Heart right ventricle (tissue), 16 donors: ENCODE measurements at regions of chr1 and their contacts with region 1.

Region 1: GRCh38 chr1:100351095-100351891 is 1.0 kb upstream of the CDC14A start:
- DNase-seq: peak; percentile 86 to 87
- ATAC-seq: peak; percentile 63 to 88 (median 83)
- H3K4me3 ChIP-seq: peak overlapping the region; percentile 67 to 97 (median 90)
- H3K27ac ChIP-seq: peak overlapping the region; percentile 57 to 95 (median 89)
- H3K4me1 ChIP-seq: peaks cover 3 to 36% (median 32%) of the 10 kb centered on the region in 9 donors
- H3K27me3 ChIP-seq: no peaks in the 10 kb centered on the region
- CTCF ChIP-seq: peak in 7 of 9 donors; percentile 33 to 63 (median 45)

Region 2: GRCh38 chr1:99994496-99994895 is 356.8 kb before region 1 on chr1:
- intact Hi-C with region 1: no loop called
- DNase-seq: no peak
- ATAC-seq: no peak
- H3K4me3 ChIP-seq: no peak overlapping the region
- H3K27ac ChIP-seq: no peak overlapping the region
- H3K4me1 ChIP-seq: no peaks in the 10 kb centered on the region
- H3K27me3 ChIP-seq: no peaks in the 10 kb centered on the region
- CTCF ChIP-seq: no peak

Region 3: GRCh38 chr1:100249537-100250257 is 101.6 kb before region 1 on chr1 and contains the start of gene DBT:
- intact Hi-C with region 1: loop called in 1 of 10 experiments (anchors 1 kb)
- DNase-seq: peak; percentile 90 to 96
- ATAC-seq: peak; percentile 100
- H3K4me3 ChIP-seq: peak within 1 kb of the TSS; percentile 58 to 97 (median 79)
- H3K27ac ChIP-seq: peak within 1 kb of the TSS in 9 of 10 donors; percentile 77 to 95 (median 88)
- H3K4me1 ChIP-seq: peaks cover 0 to 27% (median 19%) of the 10 kb centered on the region in 9 donors
- H3K27me3 ChIP-seq: no peaks in the 10 kb centered on the region
- CTCF ChIP-seq: no peak
- total RNA-seq, gene DBT: 27.9 to 49.0 (median 38.8) TPM

Region 4: GRCh38 chr1:100277866-100278265 is 73.4 kb before region 1 on chr1:
- intact Hi-C with region 1: loop called in 1 of 10 experiments (anchors 5 kb)
- DNase-seq: no peak
- ATAC-seq: no peak
- H3K4me3 ChIP-seq: no peak overlapping the region
- H3K27ac ChIP-seq: no peak overlapping the region
- H3K4me1 ChIP-seq: peaks cover 0 to 23% (median 9%) of the 10 kb centered on the region in 9 donors
- H3K27me3 ChIP-seq: no peaks in the 10 kb centered on the region
- CTCF ChIP-seq: no peak

Region 5: GRCh38 chr1:100434831-100435230 is 83.5 kb after region 1 on chr1:
- intact Hi-C with region 1: loop called in 5 of 10 experiments (anchors 5 to 10 kb)
- DNase-seq: no peak
- ATAC-seq: no peak
- H3K4me3 ChIP-seq: no peak overlapping the region
- H3K27ac ChIP-seq: no peak overlapping the region
- H3K4me1 ChIP-seq: peaks cover 0 to 15% (median 5%) of the 10 kb centered on the region in 9 donors
- H3K27me3 ChIP-seq: no peaks in the 10 kb centered on the region
- CTCF ChIP-seq: no peak

Region 6: GRCh38 chr1:100449477-100449876 is 98.2 kb after region 1 on chr1:
- intact Hi-C with region 1: loop called in 6 of 10 experiments (anchors 5 to 10 kb)
- DNase-seq: no peak
- ATAC-seq: no peak
- H3K4me3 ChIP-seq: no peak overlapping the region
- H3K27ac ChIP-seq: no peak overlapping the region
- H3K4me1 ChIP-seq: peaks cover 0 to 15% (median 0%) of the 10 kb centered on the region in 9 donors
- H3K27me3 ChIP-seq: no peaks in the 10 kb centered on the region
- CTCF ChIP-seq: no peak